ENCODE measurements at regions of chr22 and their contacts with region 1.

Region 1: DNA sequence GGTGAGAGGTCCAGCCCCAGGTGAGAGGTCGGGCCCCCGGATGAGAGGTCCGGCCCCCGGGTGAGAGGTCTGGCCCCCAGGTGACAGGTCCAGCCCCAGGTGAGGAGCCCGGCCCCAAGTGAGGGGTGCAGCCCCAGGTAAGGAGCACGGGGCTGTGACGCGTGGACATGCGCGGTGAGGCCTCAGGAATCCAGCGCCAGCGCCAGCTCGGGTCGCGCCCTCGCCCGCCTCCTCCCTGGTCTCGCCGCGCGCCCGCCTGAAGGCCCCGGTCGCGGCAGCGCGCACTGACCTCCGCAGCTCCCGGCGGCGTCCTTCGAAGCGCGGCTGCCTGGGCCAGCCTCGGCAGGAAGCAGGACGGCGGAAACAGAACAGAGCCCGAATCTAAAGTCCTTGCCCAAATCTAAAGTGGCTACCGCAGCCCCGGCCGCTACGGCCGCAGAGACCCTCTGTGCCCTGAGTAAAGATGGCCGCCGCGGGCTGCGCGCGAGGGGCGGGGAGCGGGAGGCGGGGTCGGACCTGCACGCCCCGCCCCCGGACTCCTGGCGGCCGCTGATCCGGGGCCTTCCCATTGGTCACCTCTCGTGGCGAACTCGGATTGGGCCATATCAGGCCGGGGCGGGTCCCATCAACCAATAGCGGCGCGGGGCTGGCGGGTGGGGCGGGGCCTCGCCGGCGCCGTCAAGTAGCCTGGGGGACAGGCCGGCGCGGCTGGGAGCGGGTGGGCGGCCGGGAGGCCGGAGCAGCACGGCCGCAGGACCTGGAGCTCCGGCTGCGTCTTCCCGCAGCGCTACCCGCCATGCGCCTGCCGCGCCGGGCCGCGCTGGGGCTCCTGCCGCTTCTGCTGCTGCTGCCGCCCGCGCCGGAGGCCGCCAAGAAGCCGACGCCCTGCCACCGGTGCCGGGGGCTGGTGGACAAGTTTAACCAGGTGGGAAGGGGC is at the starts of genes ALG12 and CRELD2:
- DNase-seq: peak; percentile 99
- H3K4me3 ChIP-seq: peak within 1 kb of the TSS; percentile 60 to 70
- H3K27ac ChIP-seq: peak within 1 kb of the TSS; percentile 90 to 91
- H3K4me1 ChIP-seq: peaks cover 6% of the 10 kb centered on the region
- H3K27me3 ChIP-seq: no peaks in the 10 kb centered on the region
- CTCF ChIP-seq: peak; percentile 11 to 64 (median 24)
- POLR2A ChIP-seq: peak; percentile 58
- total RNA-seq, gene ALG12: 26.1 to 33.6 TPM
- total RNA-seq, gene CRELD2: 55.1 to 70.1 TPM

Region 2: DNA sequence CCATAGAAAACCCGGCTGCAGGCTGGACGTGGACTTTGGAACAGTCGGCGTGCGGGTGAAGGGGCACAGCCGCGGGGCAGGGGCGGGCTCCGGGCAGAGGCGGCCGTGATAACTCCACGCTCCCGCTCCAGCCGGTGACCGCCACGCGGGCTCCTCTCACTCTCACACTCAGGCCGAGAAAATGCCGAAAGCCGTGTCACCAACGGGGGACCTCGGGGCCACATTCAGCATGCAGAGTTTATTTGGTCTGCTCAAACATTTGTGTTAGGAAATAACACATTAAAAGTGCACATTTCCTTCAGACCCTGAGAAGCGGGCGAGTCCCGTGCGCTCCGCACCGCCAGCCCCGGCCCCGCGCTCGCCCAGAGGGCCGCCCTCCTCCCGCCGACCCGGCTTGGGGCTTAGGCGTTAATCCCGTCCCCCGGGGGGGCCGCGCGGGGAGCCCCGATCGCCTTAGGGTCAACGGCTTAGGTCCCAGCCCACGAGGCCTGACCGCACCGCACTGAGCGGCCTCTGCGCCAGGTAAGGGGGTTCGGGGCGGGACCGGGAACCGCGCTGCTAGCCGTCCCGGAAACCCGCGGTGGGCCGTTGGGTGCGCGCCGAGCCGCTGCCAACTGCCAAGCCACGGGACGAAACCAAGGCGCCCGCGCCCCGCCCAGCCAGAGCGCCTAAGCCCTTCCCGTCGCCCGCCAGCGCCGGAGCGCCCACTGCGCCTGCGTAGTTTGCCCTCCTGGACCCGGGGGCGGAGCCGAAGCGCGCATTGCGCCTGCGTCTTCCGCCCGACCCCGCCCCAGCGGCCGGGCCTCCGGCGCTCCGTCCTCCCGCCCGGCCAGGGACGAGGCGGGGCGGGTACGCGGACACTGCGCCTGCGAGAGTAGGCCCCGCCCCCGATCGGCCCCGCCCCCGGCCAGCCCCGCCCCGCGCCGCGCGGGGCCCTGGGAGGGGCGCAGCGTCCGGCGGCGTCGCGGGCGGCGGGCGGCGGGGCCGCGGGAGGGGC is 65.0 kb before region 1 on chr22 and contains the start of gene ZBED4:
- intact Hi-C with region 1: loop called (anchors 5 kb)
- DNase-seq: peak; percentile 96
- H3K4me3 ChIP-seq: peak within 1 kb of the TSS; percentile 65 to 82
- H3K27ac ChIP-seq: peak within 1 kb of the TSS; percentile 89 to 96
- H3K4me1 ChIP-seq: peaks cover 18% of the 10 kb centered on the region
- H3K27me3 ChIP-seq: peaks cover 8% of the 10 kb centered on the region
- CTCF ChIP-seq: peak in 2 of 4 experiments; percentile 17 to 33
- POLR2A ChIP-seq: peak; percentile 91
- total RNA-seq, gene ZBED4: 10.4 to 11.2 TPM